AG04450 (cell line): ENCODE measurements at regions of chrX and their contacts with region 1.

Region 1: DNA sequence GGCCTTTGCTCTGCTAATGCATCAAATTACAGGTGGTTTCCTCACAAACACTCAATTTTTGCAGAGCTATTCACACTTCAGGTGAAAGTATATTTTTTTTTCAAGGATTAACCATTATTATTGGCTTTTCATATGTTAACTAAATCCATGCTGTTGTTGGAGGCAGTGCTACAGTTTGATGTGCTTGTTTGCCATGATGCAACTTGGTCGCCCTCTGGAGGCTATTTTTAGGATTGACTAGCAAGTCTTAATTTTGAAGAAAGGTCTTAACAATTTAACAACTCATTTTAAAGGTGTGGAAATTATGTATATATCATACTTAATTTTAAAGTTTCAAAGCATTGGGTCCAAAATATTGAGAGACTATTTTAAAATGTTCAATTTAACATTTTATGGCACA is 168.8 kb upstream of the FAM47A start:
- DNase-seq: peak; percentile 4
- H3K4me3 ChIP-seq: no peak overlapping the region
- H3K27ac ChIP-seq: no peak overlapping the region
- H3K27me3 ChIP-seq: no peaks in the 10 kb centered on the region
- CTCF ChIP-seq: peak; percentile 48

Region 2: DNA sequence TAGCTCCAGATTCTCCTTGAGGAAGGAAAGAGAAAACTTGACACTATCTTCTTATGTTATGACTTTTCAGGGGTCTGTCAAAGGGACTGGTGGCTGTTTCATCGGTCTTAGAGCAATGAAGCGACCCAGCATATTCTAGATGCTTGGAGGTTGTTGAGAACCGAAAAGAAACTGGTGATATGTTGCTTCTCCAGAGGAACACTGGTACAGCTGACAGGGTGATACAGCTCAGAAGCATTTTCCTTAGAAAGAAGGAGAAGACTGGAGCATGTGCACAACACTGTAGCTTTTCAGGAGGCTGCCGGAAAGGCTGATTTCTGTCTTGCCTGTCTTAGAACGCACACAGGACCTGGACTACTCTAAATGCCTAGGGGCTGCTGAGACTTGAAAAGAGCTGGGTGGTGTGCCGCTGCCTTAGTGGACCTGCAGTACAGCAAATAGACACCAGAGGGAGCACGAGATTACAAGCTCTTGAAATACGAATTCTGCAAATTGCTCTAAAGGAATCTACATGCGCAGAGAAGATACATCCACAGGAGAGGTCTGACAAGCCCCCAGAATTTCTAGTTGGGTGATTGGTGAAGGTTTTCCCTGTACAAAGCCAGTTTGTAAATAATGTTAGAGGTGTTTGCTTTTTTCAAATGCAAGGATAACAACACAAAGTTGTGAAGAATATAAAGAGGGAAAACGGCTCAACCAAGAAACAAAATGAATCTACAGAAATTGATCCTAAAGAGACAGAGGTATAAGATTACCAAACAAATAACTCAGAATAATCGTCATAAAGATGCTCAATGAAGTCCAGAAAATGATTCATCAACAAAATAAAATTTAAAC is 866.4 kb before region 1 on chrX:
- CTCF ChIA-PET with region 1: interaction called, 11 read pairs
- POLR2A ChIA-PET with region 1: no interaction called
- DNase-seq: peak; percentile 0
- H3K4me3 ChIP-seq: no peak overlapping the region
- H3K27ac ChIP-seq: no peak overlapping the region
- H3K27me3 ChIP-seq: no peaks in the 10 kb centered on the region
- CTCF ChIP-seq: peak; percentile 65

Region 3: GRCh38 chrX:34288782-34289181 is 12.1 kb before region 1 on chrX:
- CTCF ChIA-PET with region 1: no interaction called
- POLR2A ChIA-PET with region 1: no interaction called
- DNase-seq: no peak
- H3K4me3 ChIP-seq: no peak overlapping the region
- H3K27ac ChIP-seq: no peak overlapping the region
- H3K27me3 ChIP-seq: no peaks in the 10 kb centered on the region
- CTCF ChIP-seq: no peak

Region 4: GRCh38 chrX:34790026-34790425 is 489.2 kb after region 1 on chrX:
- CTCF ChIA-PET with region 1: no interaction called
- POLR2A ChIA-PET with region 1: no interaction called
- DNase-seq: no peak
- H3K4me3 ChIP-seq: no peak overlapping the region
- H3K27ac ChIP-seq: no peak overlapping the region
- H3K27me3 ChIP-seq: no peaks in the 10 kb centered on the region
- CTCF ChIP-seq: no peak